Activated CD8-positive, alpha-beta T cell treated with anti-CD3 and anti-CD28 coated beads for 36 hours (primary cell): ENCODE measurements at regions of chr7 and their contacts with region 1.

Region 1: GRCh38 chr7:25894902-25895791 is 256.9 kb upstream of the NFE2L3 start:
- DNase-seq: peak; percentile 72
- ATAC-seq: peak; percentile 71
- H3K4me3 Mint-ChIP-seq: peak overlapping the region; percentile 4
- H3K27ac Mint-ChIP-seq: no peak overlapping the region
- H3K4me1 Mint-ChIP-seq: peaks cover 27% of the 10 kb centered on the region
- H3K27me3 Mint-ChIP-seq: peaks cover 8% of the 10 kb centered on the region
- CTCF ChIP-seq: peak; percentile 73

Region 2: DNA sequence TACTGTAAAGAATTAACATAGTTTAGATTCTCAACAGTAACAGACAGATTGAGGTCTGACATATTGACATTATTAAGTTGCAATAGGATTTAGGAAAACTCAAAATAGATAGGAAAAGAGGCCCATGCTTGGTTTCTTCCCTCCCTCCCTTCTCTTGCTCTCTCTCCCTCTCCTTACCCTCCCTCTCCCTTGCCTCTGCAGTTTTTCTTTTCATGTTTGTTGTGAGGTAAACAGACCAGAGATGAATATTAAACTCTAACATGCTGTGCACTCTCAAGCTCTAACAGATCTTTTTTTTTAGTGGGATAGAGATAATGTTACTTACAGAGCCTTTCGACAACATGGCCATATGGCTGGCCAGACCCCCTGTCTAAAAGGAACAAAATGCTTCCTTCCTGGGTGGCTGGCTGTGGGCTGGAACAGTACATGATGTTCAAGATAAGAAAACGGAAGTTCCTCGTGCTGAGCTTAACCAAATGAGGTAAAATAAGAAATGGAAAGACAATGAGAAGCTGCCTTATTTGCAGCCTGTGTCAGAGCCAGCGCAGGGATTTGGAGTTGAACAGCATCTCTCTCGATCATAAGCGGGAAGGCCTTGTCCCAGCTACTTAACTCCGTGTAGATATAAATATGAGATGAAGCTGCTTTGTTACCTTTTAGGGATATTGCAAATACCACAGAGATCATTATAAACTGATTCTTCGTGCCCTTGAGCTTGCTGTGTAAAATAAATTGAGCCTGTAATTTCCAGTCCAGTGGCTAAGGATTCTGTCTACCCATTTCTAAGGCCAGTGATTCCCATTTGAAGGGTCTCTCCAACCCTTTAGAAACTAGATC is 275.0 kb before region 1 on chr7:
- CTCF ChIA-PET with region 1: no interaction called
- POLR2A ChIA-PET with region 1: no interaction called
- intact Hi-C with region 1: no loop called
- DNase-seq: peak; percentile 18
- ATAC-seq: peak; percentile 67
- H3K4me3 Mint-ChIP-seq: peak overlapping the region; percentile 49
- H3K27ac Mint-ChIP-seq: peak overlapping the region; percentile 88
- H3K4me1 Mint-ChIP-seq: peaks cover 38% of the 10 kb centered on the region
- H3K27me3 Mint-ChIP-seq: no peaks in the 10 kb centered on the region
- CTCF ChIP-seq: no peak

Region 3: GRCh38 chr7:25877802-25878789 is 17.1 kb before region 1 on chr7:
- CTCF ChIA-PET with region 1: interaction called, 24 read pairs
- POLR2A ChIA-PET with region 1: no interaction called
- intact Hi-C with region 1: no loop called
- DNase-seq: no peak
- ATAC-seq: no peak
- H3K4me3 Mint-ChIP-seq: no peak overlapping the region
- H3K27ac Mint-ChIP-seq: no peak overlapping the region
- H3K4me1 Mint-ChIP-seq: no peaks in the 10 kb centered on the region
- H3K27me3 Mint-ChIP-seq: peaks cover 29% of the 10 kb centered on the region
- CTCF ChIP-seq: no peak

Region 4: GRCh38 chr7:25913598-25914224 is 18.6 kb after region 1 on chr7:
- CTCF ChIA-PET with region 1: interaction called, 14 read pairs
- POLR2A ChIA-PET with region 1: no interaction called
- intact Hi-C with region 1: no loop called
- DNase-seq: no peak
- ATAC-seq: no peak
- H3K4me3 Mint-ChIP-seq: no peak overlapping the region
- H3K27ac Mint-ChIP-seq: no peak overlapping the region
- H3K4me1 Mint-ChIP-seq: no peaks in the 10 kb centered on the region
- H3K27me3 Mint-ChIP-seq: peaks cover 2% of the 10 kb centered on the region
- CTCF ChIP-seq: no peak

Region 5: GRCh38 chr7:26061688-26062150 is 166.6 kb after region 1 on chr7:
- CTCF ChIA-PET with region 1: interaction called, 144 read pairs
- POLR2A ChIA-PET with region 1: no interaction called
- intact Hi-C with region 1: loop called (anchors 1 kb)
- DNase-seq: peak; percentile 89
- ATAC-seq: peak; percentile 89
- H3K4me3 Mint-ChIP-seq: no peak overlapping the region
- H3K27ac Mint-ChIP-seq: no peak overlapping the region
- H3K4me1 Mint-ChIP-seq: peaks cover 9% of the 10 kb centered on the region
- H3K27me3 Mint-ChIP-seq: peaks cover 18% of the 10 kb centered on the region
- CTCF ChIP-seq: peak; percentile 93

Region 6: GRCh38 chr7:26151953-26152781 is 257.0 kb after region 1 on chr7 and contains the start of gene NFE2L3:
- CTCF ChIA-PET with region 1: interaction called, 11 read pairs
- POLR2A ChIA-PET with region 1: no interaction called
- intact Hi-C with region 1: no loop called
- DNase-seq: peak; percentile 88
- ATAC-seq: peak; percentile 72
- H3K4me3 Mint-ChIP-seq: peak within 1 kb of the TSS; percentile 96
- H3K27ac Mint-ChIP-seq: peak within 1 kb of the TSS; percentile 99
- H3K4me1 Mint-ChIP-seq: peaks cover 51% of the 10 kb centered on the region
- H3K27me3 Mint-ChIP-seq: no peaks in the 10 kb centered on the region
- CTCF ChIP-seq: no peak
- total RNA-seq, gene NFE2L3: 21.5 to 22.6 TPM

Region 7: DNA sequence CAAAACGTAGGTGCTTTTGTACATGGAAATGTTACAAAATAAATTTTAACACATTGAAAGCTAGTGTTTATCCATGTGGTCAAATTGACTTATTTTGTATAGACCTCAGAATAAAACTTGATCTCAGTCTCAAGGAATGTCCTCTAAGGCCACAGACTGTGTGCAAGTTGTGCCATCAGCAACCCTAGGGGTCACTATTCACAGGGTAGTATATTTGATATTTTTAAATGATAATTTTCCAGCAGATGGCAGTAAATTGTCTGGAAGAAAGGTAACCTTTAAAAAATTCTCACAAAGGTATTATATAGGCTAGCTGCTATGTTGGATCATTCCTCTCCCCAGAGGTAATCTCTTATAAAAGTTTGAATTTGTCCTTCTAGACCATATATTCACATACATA is 383.6 kb after region 1 on chr7:
- CTCF ChIA-PET with region 1: no interaction called
- POLR2A ChIA-PET with region 1: no interaction called
- intact Hi-C with region 1: loop called (anchors 10 kb)
- DNase-seq: peak; percentile 10
- ATAC-seq: peak; percentile 37
- H3K4me3 Mint-ChIP-seq: no peak overlapping the region
- H3K27ac Mint-ChIP-seq: no peak overlapping the region
- H3K4me1 Mint-ChIP-seq: peaks cover 24% of the 10 kb centered on the region
- H3K27me3 Mint-ChIP-seq: no peaks in the 10 kb centered on the region
- CTCF ChIP-seq: peak; percentile 44

Region 8: GRCh38 chr7:26686448-26686981 is 791.4 kb after region 1 on chr7:
- CTCF ChIA-PET with region 1: interaction called, 17 read pairs
- POLR2A ChIA-PET with region 1: no interaction called
- intact Hi-C with region 1: no loop called
- DNase-seq: peak; percentile 4
- ATAC-seq: peak; percentile 30
- H3K4me3 Mint-ChIP-seq: no peak overlapping the region
- H3K27ac Mint-ChIP-seq: no peak overlapping the region
- H3K4me1 Mint-ChIP-seq: no peaks in the 10 kb centered on the region
- H3K27me3 Mint-ChIP-seq: peaks cover 12% of the 10 kb centered on the region
- CTCF ChIP-seq: peak; percentile 74